Cardiac septum (tissue), 1 donor: ENCODE measurements at regions of chr3 and their contacts with region 1.

Region 1: GRCh38 chr3:122415720-122416654 is at the start of gene WDR5B:
- DNase-seq: peak; percentile 99
- total RNA-seq, gene WDR5B: 2.7 TPM

Region 2: DNA sequence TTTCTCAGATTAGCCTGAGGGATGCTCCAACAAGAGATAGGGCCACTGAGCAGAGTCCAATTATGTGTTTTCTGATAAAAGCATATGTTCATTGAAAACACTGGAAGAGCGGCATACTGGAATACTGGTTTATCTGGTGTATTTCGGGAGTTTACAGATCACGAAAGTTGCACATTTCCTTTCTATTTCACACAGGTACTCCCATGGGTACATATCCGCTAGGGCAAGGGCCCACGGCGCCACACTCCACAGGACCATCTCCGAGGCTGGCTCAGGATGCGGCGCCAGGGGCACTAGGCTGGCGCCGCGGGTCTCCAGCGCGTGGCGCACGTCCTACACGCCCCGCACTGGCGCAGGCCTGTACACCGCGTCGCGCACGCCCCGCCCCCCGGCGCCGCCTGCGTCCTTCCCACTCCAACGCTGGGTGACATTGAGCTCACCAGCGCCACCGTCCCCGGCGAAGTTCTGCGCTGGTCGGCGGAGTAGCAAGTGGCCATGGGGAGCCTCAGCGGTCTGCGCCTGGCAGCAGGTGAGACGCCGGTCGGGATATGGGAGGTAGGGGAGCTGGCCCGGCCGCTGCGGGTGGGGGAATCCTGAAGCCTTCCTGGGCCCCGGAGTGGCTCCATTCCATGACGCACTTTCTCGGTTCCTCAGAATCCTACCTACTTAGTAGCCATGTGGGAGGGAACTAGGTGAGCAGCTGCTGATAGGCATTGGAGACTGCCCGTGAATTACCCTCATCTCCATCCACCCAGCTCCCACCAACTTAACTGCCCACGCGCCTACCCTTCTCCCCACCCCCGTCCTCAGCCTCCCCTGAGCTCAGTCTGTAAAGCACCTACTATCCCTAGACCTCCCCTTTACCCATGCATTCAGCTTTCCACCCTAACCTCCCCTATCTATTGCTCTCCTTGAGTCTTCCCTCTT is 32.0 kb before region 1 on chr3 and contains the start of gene FAM162A:
- intact Hi-C with region 1: loop called (anchors 2 kb)
- DNase-seq: peak; percentile 98
- total RNA-seq, gene FAM162A: 109 TPM

Region 3: GRCh38 chr3:122514123-122515019 is 98.4 kb after region 1 on chr3 and contains the start of gene KPNA1:
- intact Hi-C with region 1: loop called (anchors 2 kb)
- DNase-seq: peak; percentile 95
- total RNA-seq, gene KPNA1: 94.7 TPM